Common myeloid progenitor, CD34-positive (primary cell): ENCODE measurements at regions of chr1 and their contacts with region 1.

Region 1: GRCh38 chr1:159071970-159072582 is 4.5 kb downstream of the AIM2 start:
- DNase-seq: peak; percentile 54 to 68 (median 58)
- H3K4me3 ChIP-seq: no peak overlapping the region
- H3K27ac ChIP-seq: no peak overlapping the region
- H3K4me1 ChIP-seq: peaks cover 9 to 19% (median 11%) of the 10 kb centered on the region in 4 experiments
- H3K27me3 ChIP-seq: no peaks in the 10 kb centered on the region

Region 2: GRCh38 chr1:159040893-159041724 is 31.0 kb before region 1 on chr1:
- CTCF ChIA-PET with region 1: no interaction called
- POLR2A ChIA-PET with region 1: no interaction called
- DNase-seq: no peak
- H3K4me3 ChIP-seq: no peak overlapping the region
- H3K27ac ChIP-seq: no peak overlapping the region
- H3K4me1 ChIP-seq: no peaks in the 10 kb centered on the region
- H3K27me3 ChIP-seq: no peaks in the 10 kb centered on the region

Region 3: GRCh38 chr1:159056069-159056698 is 15.9 kb before region 1 on chr1:
- CTCF ChIA-PET with region 1: interaction called, 25 read pairs
- POLR2A ChIA-PET with region 1: no interaction called
- DNase-seq: peak in 1 of 3 donors; percentile 8
- H3K4me3 ChIP-seq: no peak overlapping the region
- H3K27ac ChIP-seq: no peak overlapping the region
- H3K4me1 ChIP-seq: peaks cover 6 to 24% (median 14%) of the 10 kb centered on the region in 4 experiments
- H3K27me3 ChIP-seq: no peaks in the 10 kb centered on the region

Region 4: GRCh38 chr1:159229486-159229885 is 157.4 kb after region 1 on chr1:
- CTCF ChIA-PET with region 1: no interaction called
- POLR2A ChIA-PET with region 1: no interaction called
- DNase-seq: no peak
- H3K4me3 ChIP-seq: no peak overlapping the region
- H3K27ac ChIP-seq: no peak overlapping the region
- H3K4me1 ChIP-seq: no peaks in the 10 kb centered on the region
- H3K27me3 ChIP-seq: peaks cover 0 to 6% (median 0%) of the 10 kb centered on the region in 5 experiments